Activated T-helper 2 cell treated with anti-CD3 and anti-CD28 coated beads, Interferon-gamma antibody, Interleukin-2, Interleukin-4, amounts not matched to agents 10 μg/mL and 5 μg/mL and 100 μg/mL, durations not matched to agents 14 hours and 24 hours and 36 hours (primary cell): ENCODE measurements at regions of chr15 and their contacts with region 1.

Region 1: DNA sequence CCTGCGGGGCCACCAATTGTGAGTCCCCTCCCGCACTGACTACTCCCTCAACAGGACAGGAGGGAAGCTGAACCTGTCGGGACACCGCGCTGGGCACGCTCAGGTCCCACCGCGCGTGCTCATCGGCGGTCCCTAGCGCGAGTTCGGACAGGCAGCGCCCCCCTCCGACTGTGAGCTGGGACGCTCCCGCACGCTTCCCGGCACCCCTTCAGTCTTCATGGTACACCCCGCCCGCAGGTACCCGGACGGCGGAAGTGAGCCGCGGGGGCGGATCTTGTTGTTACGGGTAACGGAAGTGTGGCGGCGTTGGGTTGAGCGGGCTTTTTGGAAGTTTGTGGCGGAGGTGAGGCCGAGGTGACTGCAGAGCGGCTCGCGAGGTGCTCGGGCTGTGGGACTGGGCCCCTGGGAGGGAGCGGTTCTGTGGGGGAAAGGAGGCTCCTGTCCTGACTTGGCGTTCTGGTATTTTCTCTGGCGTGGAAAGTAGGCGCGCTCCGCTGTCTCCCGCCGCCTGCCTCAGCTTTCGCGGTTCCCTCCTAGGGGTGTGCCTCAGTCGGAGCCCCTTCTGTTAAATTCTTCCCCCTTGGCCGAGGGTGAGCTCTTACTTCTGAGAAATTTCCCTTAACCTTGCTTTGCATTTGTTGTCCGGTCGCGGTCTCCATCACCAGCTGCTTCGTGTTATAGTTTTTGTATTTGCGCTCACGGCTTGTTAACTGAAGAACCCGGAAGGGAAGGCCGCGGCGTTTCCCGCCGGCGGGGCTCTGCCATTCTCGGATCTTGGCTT is at the start of gene FANCI:
- DNase-seq: peak; percentile 94
- H3K4me3 Mint-ChIP-seq: peak within 1 kb of the TSS; percentile 95
- H3K27ac Mint-ChIP-seq: peak within 1 kb of the TSS; percentile 89
- H3K4me1 Mint-ChIP-seq: peaks cover 37% of the 10 kb centered on the region
- H3K27me3 Mint-ChIP-seq: peaks cover 4% of the 10 kb centered on the region
- total RNA-seq, gene FANCI: 176 and 184 TPM in 2 replicates

Region 2: DNA sequence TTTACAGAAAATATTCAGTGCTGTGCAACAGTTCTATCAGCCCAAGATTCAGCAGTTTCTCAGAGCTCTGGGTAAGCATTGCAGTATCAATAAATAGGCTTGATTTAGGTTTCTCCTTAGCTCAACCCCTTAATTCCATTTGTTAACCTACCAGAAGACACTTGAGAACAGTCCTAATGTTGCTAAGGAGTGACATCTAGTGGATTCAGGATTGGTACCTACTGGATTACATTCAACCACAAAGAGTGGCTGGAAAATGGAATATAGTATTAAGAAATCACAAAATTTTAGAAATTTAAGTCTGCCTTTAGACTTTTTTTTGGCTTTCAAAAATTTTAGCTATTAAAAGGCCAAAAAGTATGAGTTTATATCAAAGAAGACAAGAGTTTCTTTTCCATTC is 56.0 kb after region 1 on chr15:
- intact Hi-C with region 1: loop called (anchors 5 kb)
- DNase-seq: no peak
- H3K4me3 Mint-ChIP-seq: no peak overlapping the region
- H3K27ac Mint-ChIP-seq: peak overlapping the region; percentile 84
- H3K4me1 Mint-ChIP-seq: peaks cover 40% of the 10 kb centered on the region
- H3K27me3 Mint-ChIP-seq: no peaks in the 10 kb centered on the region